Common myeloid progenitor, CD34-positive (primary cell): ENCODE measurements at regions of chr5 and their contacts with region 1.

Region 1: DNA sequence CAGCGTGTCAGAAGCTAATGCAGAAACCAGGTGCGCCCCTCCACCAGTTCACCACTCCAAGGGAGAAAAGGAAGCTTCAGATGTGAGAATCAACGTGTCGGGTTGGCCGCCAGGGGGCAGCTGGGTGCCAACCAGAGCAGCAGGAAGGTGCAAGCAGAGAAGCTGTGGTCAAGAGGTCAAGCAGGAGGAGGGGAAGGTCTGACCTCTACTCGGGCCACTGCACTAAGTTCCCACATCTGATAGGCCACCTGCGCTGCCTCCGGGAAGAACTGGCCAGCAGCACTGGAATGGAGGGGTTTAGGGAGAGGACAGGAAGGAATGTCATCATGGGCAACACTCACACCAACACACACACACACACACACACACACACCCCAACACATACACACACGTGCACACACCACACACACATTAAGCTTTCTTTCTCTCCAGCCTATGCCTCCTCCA is 31.4 kb downstream of the ANXA6 start:
- DNase-seq: peak; percentile 50 to 67 (median 58)
- H3K4me3 ChIP-seq: no peak overlapping the region
- H3K27ac ChIP-seq: peak overlapping the region in 1 of 2 experiments; percentile 2
- H3K4me1 ChIP-seq: peaks cover 0 to 21% (median 11%) of the 10 kb centered on the region in 4 experiments
- H3K27me3 ChIP-seq: no peaks in the 10 kb centered on the region

Region 2: GRCh38 chr5:151115274-151115905 is 10.8 kb before region 1 on chr5:
- CTCF ChIA-PET with region 1: interaction called, 81 read pairs
- POLR2A ChIA-PET with region 1: interaction called, 3 read pairs
- DNase-seq: peak; percentile 51 to 75 (median 70)
- H3K4me3 ChIP-seq: no peak overlapping the region
- H3K27ac ChIP-seq: no peak overlapping the region
- H3K4me1 ChIP-seq: no peaks in the 10 kb centered on the region
- H3K27me3 ChIP-seq: no peaks in the 10 kb centered on the region

Region 3: GRCh38 chr5:151150471-151151262 is 24.4 kb after region 1 on chr5:
- CTCF ChIA-PET with region 1: interaction called, 58 read pairs
- POLR2A ChIA-PET with region 1: interaction called, 6 read pairs
- DNase-seq: peak; percentile 47 to 88 (median 80)
- H3K4me3 ChIP-seq: peak overlapping the region in 5 of 7 experiments; percentile 7 to 60 (median 37)
- H3K27ac ChIP-seq: peak overlapping the region; percentile 66 to 85
- H3K4me1 ChIP-seq: peaks cover 30 to 89% (median 77%) of the 10 kb centered on the region in 4 experiments
- H3K27me3 ChIP-seq: no peaks in the 10 kb centered on the region

Region 4: DNA sequence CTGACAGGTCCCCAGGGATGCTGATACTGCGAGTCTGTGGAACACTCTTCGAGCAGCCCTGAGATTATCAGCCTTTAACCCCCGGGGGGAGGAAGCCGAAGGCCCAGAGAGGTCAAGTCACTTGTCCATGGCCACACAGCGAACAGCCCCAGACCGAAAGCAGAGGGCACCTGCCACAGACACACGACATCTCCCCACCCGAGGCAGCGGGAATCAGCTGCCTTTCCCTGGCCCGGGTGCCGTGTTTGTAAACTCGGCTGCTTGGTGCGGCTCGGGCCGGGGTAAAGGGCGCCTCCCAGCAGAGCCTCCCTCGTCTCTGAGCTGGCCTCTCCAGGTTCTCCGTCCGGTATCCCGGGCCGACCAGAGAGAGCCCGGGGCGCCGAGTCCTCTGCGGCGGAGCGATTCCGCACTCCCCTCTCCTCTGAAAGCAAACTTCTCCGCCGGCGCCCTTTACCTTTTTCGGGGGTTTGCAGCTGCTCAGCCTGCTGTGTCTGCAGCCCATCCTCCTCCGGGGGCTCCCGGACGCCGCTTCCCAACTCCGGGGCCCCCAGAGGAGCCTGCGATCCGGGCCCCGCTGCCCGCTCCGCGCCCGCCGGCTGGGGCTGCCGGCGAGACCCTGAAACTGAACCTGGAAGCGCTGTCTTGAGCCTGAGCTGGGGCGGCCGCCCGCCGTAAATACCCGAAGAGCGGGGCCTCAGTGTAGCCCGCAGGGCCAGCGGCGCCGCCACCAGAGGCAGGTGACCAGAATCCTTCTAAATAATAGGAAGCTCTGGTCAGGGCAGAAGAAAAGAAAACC is 97.4 kb after region 1 on chr5 and contains the start of gene CCDC69:
- CTCF ChIA-PET with region 1: interaction called, 12 read pairs
- POLR2A ChIA-PET with region 1: no interaction called
- DNase-seq: peak; percentile 63 to 76 (median 63)
- H3K4me3 ChIP-seq: peak within 1 kb of the TSS; percentile 79 to 92 (median 89)
- H3K27ac ChIP-seq: peak within 1 kb of the TSS in 1 of 2 experiments; percentile 78
- H3K4me1 ChIP-seq: peaks cover 9 to 51% (median 39%) of the 10 kb centered on the region in 4 experiments
- H3K27me3 ChIP-seq: no peaks in the 10 kb centered on the region

Region 5: GRCh38 chr5:151569132-151570046 is 443.2 kb after region 1 on chr5:
- CTCF ChIA-PET with region 1: no interaction called
- POLR2A ChIA-PET with region 1: no interaction called
- DNase-seq: peak in 1 of 3 donors; percentile 11
- H3K4me3 ChIP-seq: no peak overlapping the region
- H3K27ac ChIP-seq: no peak overlapping the region
- H3K4me1 ChIP-seq: no peaks in the 10 kb centered on the region
- H3K27me3 ChIP-seq: no peaks in the 10 kb centered on the region